Endothelial cell of umbilical vein (primary cell): ENCODE measurements at regions of chrX and their contacts with region 1.

Region 1: DNA sequence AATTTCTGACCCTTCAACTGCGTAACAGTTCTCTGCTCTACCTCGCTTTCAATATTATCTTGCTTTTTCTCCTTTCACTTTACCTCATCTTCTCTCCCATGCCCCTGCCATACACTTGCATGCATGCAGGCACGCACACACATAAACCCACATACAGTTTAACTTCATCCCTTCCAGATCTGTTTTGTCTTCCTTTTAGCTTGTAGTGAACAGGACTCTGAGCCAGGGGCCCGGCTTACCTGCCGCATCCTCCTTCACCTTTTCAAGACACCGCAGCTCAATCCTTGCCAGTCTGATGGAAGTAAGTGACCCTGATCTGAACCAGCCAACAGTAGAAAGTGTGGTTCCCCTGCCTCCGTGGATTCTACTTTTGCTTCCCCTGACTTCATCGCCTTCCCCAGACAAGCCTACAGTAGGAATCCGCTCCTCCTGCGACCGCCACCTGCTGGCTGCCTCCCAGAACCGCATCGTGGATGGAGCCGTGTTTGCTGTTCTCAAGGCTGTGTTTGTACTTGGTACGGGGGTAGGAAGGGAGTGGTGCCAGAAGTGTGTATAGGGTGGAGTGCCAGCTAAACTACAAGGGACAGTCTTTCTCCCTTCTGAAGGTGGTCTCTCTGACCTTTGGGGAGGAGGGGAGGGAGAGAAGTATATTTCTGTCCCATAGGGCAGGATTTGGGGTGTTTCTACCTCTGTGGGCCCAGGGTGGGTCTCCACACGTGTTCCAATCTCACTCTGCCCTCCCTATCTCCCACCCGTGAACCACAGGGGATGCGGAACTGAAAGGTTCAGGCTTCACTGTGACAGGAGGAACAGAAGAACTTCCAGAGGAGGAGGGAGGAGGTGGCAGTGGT is 10.7 kb downstream of the MED12 start:
- DNase-seq: peak; percentile 64
- H3K4me3 ChIP-seq: no peak overlapping the region
- H3K27ac ChIP-seq: no peak overlapping the region
- H3K4me1 ChIP-seq: no peaks in the 10 kb centered on the region
- H3K27me3 ChIP-seq: no peaks in the 10 kb centered on the region
- CTCF ChIP-seq: peak; percentile 70 to 73
- POLR2A ChIP-seq: no peak

Region 2: GRCh38 chrX:70769659-70770232 is 359.4 kb before region 1 on chrX:
- CTCF ChIA-PET with region 1: no interaction called
- POLR2A ChIA-PET with region 1: no interaction called
- dilution Hi-C with region 1: no loop called
- intact Hi-C with region 1: loop called (anchors 5 kb)
- DNase-seq: peak; percentile 3
- H3K4me3 ChIP-seq: no peak overlapping the region
- H3K27ac ChIP-seq: no peak overlapping the region
- H3K4me1 ChIP-seq: no peaks in the 10 kb centered on the region
- H3K27me3 ChIP-seq: no peaks in the 10 kb centered on the region
- CTCF ChIP-seq: no peak
- POLR2A ChIP-seq: no peak

Region 3: DNA sequence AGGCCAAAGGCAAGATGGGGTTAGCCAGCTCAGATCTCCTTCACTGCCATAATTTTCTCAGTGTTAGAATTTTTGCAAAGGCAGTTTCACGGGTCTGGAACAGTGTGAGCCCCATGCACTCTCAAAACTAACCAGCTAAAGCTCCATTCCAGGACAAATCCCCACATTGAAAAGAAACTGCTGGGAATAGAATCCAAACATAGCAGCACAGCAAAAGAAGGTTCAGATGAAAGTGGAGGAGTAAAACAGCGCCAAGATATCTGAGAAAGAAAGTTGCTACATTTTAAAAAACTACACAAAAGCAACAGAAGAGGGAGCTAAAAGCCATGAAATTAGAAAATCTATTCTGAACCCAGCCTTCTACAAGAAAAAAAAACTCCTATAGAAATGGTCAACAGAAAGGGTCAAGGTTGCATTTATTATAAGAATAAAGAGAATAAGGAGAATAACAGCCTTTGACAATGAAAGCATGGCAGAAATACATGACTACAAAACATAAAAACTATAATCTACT is 158.6 kb before region 1 on chrX:
- CTCF ChIA-PET with region 1: interaction called, 3 read pairs
- POLR2A ChIA-PET with region 1: no interaction called
- dilution Hi-C with region 1: no loop called
- intact Hi-C with region 1: loop called (anchors 1 kb)
- DNase-seq: peak; percentile 18
- H3K4me3 ChIP-seq: no peak overlapping the region
- H3K27ac ChIP-seq: no peak overlapping the region
- H3K4me1 ChIP-seq: no peaks in the 10 kb centered on the region
- H3K27me3 ChIP-seq: no peaks in the 10 kb centered on the region
- CTCF ChIP-seq: no peak
- POLR2A ChIP-seq: no peak

Region 4: GRCh38 chrX:71068049-71068763 is 60.9 kb before region 1 on chrX and contains the start of gene SNX12:
- CTCF ChIA-PET with region 1: no interaction called
- POLR2A ChIA-PET with region 1: no interaction called
- dilution Hi-C with region 1: no loop called
- intact Hi-C with region 1: loop called (anchors 1 kb)
- DNase-seq: peak; percentile 94
- H3K4me3 ChIP-seq: peak within 1 kb of the TSS; percentile 79 to 97 (median 97)
- H3K27ac ChIP-seq: peak within 1 kb of the TSS; percentile 57
- H3K4me1 ChIP-seq: no peaks in the 10 kb centered on the region
- H3K27me3 ChIP-seq: no peaks in the 10 kb centered on the region
- CTCF ChIP-seq: no peak
- POLR2A ChIP-seq: peak; percentile 74
- total RNA-seq, gene SNX12: 85.5 and 90.6 TPM in 2 replicates

Region 5: DNA sequence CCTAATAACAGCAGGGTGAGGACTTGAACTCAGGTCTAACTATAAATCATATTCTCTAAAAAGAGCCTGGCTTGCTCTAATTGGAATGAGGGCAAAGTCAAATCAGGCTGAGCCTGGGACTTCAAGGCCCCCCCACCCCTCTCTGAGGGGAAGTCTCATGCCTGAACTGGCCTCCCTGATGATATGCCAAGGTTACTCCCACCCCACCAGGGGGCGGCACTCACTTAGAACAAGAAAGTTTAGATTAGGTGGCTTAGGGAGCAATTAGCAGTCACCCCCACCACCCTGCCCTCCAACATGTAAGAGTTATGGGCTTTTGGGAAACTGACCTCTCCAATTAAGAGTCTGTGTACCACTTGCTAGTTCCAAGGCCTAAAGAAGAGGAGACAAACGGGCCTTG is 30.8 kb before region 1 on chrX:
- CTCF ChIA-PET with region 1: interaction called, 7 read pairs
- POLR2A ChIA-PET with region 1: no interaction called
- dilution Hi-C with region 1: no loop called
- intact Hi-C with region 1: loop called (anchors 1 kb)
- DNase-seq: peak; percentile 53
- H3K4me3 ChIP-seq: no peak overlapping the region
- H3K27ac ChIP-seq: no peak overlapping the region
- H3K4me1 ChIP-seq: peaks cover 6% of the 10 kb centered on the region
- H3K27me3 ChIP-seq: peaks cover 0 to 1% of the 10 kb centered on the region in 2 experiments
- CTCF ChIP-seq: peak; percentile 41 to 49
- POLR2A ChIP-seq: no peak

Region 6: GRCh38 chrX:71118032-71118984 is 10.8 kb before region 1 on chrX and contains the start of gene MED12:
- CTCF ChIA-PET with region 1: interaction called, 10 read pairs
- POLR2A ChIA-PET with region 1: no interaction called
- dilution Hi-C with region 1: no loop called
- intact Hi-C with region 1: loop called (anchors 1 kb)
- DNase-seq: peak; percentile 76
- H3K4me3 ChIP-seq: peak within 1 kb of the TSS; percentile 53 to 79 (median 78)
- H3K27ac ChIP-seq: peak within 1 kb of the TSS; percentile 59
- H3K4me1 ChIP-seq: peaks cover 5% of the 10 kb centered on the region
- H3K27me3 ChIP-seq: peaks cover 0 to 3% of the 10 kb centered on the region in 2 experiments
- CTCF ChIP-seq: no peak
- POLR2A ChIP-seq: peak; percentile 66
- total RNA-seq, gene MED12: 61.4 and 65.3 TPM in 2 replicates

Region 7: GRCh38 chrX:71935476-71935875 is 806.3 kb after region 1 on chrX:
- CTCF ChIA-PET with region 1: no interaction called
- POLR2A ChIA-PET with region 1: no interaction called
- dilution Hi-C with region 1: no loop called
- intact Hi-C with region 1: no loop called
- DNase-seq: no peak
- H3K4me3 ChIP-seq: no peak overlapping the region
- H3K27ac ChIP-seq: no peak overlapping the region
- H3K4me1 ChIP-seq: no peaks in the 10 kb centered on the region
- H3K27me3 ChIP-seq: peaks cover 0 to 9% of the 10 kb centered on the region in 2 experiments
- CTCF ChIP-seq: no peak
- POLR2A ChIP-seq: no peak